ENCODE measurements at regions of chr4 and their contacts with region 1.

Region 1: GRCh38 chr4:182806259-182807252 is 110.6 kb downstream of the DCTD start:
- DNase-seq: peak; percentile 73
- ATAC-seq: peak; percentile 43
- H3K4me3 Mint-ChIP-seq: peak overlapping the region; percentile 54
- H3K27ac Mint-ChIP-seq: peak overlapping the region; percentile 25
- H3K4me1 Mint-ChIP-seq: peaks cover 18% of the 10 kb centered on the region
- H3K27me3 Mint-ChIP-seq: peaks cover 14% of the 10 kb centered on the region
- CTCF ChIP-seq: peak; percentile 84

Region 2: GRCh38 chr4:182478475-182478874 is 328.1 kb before region 1 on chr4:
- CTCF ChIA-PET with region 1: no interaction called
- POLR2A ChIA-PET with region 1: no interaction called
- intact Hi-C with region 1: loop called (anchors 10 kb)
- DNase-seq: no peak
- ATAC-seq: no peak
- H3K4me3 Mint-ChIP-seq: no peak overlapping the region
- H3K27ac Mint-ChIP-seq: no peak overlapping the region
- H3K4me1 Mint-ChIP-seq: no peaks in the 10 kb centered on the region
- H3K27me3 Mint-ChIP-seq: peaks cover 5% of the 10 kb centered on the region
- CTCF ChIP-seq: peak; percentile 73

Region 3: DNA sequence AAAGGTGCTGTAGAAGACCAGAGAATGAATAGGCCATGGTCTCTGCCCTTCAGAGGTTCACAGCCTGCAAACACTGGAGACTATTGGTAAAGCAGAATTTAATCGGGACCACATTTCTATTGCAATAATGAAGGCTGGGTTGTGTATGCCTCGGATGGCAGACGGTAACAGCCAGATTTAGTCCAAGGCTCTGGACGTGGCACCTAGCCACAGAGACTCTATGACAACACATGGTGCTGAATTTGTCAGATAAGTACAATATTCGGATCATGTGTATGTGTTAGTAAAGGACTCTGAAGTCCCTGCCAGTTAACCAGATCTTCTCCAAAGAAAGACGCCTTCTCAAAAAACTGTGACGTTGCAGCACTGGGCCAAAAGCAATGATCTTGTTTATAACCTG is 18.4 kb before region 1 on chr4:
- CTCF ChIA-PET with region 1: no interaction called
- POLR2A ChIA-PET with region 1: no interaction called
- intact Hi-C with region 1: no loop called
- DNase-seq: no peak
- ATAC-seq: no peak
- H3K4me3 Mint-ChIP-seq: no peak overlapping the region
- H3K27ac Mint-ChIP-seq: no peak overlapping the region
- H3K4me1 Mint-ChIP-seq: no peaks in the 10 kb centered on the region
- H3K27me3 Mint-ChIP-seq: peaks cover 4% of the 10 kb centered on the region
- CTCF ChIP-seq: no peak